ENCODE measurements at regions of chr11 and their contacts with region 1.

Region 1: GRCh38 chr11:33857933-33858371 is 33.9 kb downstream of the LMO2 start:
- DNase-seq: peak; percentile 82
- ATAC-seq: peak; percentile 84 to 91
- H3K4me3 ChIP-seq: no peak overlapping the region
- H3K27ac ChIP-seq: no peak overlapping the region
- H3K4me1 ChIP-seq: peaks cover 16% of the 10 kb centered on the region
- H3K27me3 ChIP-seq: no peaks in the 10 kb centered on the region
- CTCF ChIP-seq: peak; percentile 95

Region 2: GRCh38 chr11:33588084-33588483 is 269.9 kb before region 1 on chr11:
- intact Hi-C with region 1: no loop called
- DNase-seq: no peak
- ATAC-seq: no peak
- H3K4me3 ChIP-seq: no peak overlapping the region
- H3K27ac ChIP-seq: no peak overlapping the region
- H3K4me1 ChIP-seq: no peaks in the 10 kb centered on the region
- H3K27me3 ChIP-seq: no peaks in the 10 kb centered on the region
- CTCF ChIP-seq: no peak

Region 3: GRCh38 chr11:33970984-33971466 is 113.1 kb after region 1 on chr11:
- intact Hi-C with region 1: loop called (anchors 5 kb)
- DNase-seq: no peak
- ATAC-seq: peak; percentile 75 to 82
- H3K4me3 ChIP-seq: no peak overlapping the region
- H3K27ac ChIP-seq: no peak overlapping the region
- H3K4me1 ChIP-seq: no peaks in the 10 kb centered on the region
- H3K27me3 ChIP-seq: no peaks in the 10 kb centered on the region
- CTCF ChIP-seq: peak; percentile 62

Measured in lower lobe of right lung (tissue), 2 donors.